CD4-positive, alpha-beta T cell (primary cell): ENCODE measurements at regions of chr10 and their contacts with region 1.

Region 1: GRCh38 chr10:1754506-1755153 is 17.3 kb upstream of the ADARB2 start:
- DNase-seq: no peak
- ATAC-seq: no peak
- H3K4me3 ChIP-seq: no peak overlapping the region
- H3K4me3 Mint-ChIP-seq: no peak overlapping the region
- H3K27ac ChIP-seq: no peak overlapping the region
- H3K27ac Mint-ChIP-seq: no peak overlapping the region
- H3K4me1 ChIP-seq: no peaks in the 10 kb centered on the region
- H3K4me1 Mint-ChIP-seq: no peaks in the 10 kb centered on the region
- H3K27me3 ChIP-seq: no peaks in the 10 kb centered on the region
- H3K27me3 Mint-ChIP-seq: peaks cover 10% of the 10 kb centered on the region
- CTCF ChIP-seq: no peak

Region 2: GRCh38 chr10:2978111-2978510 is 1223.5 kb after region 1 on chr10:
- CTCF ChIA-PET with region 1: no interaction called
- POLR2A ChIA-PET with region 1: no interaction called
- intact Hi-C with region 1: loop called (anchors 10 kb)
- DNase-seq: peak in 3 of 14 experiments; percentile 15 to 39 (median 32)
- ATAC-seq: no peak
- H3K4me3 ChIP-seq: no peak overlapping the region
- H3K4me3 Mint-ChIP-seq: no peak overlapping the region
- H3K27ac ChIP-seq: no peak overlapping the region
- H3K27ac Mint-ChIP-seq: no peak overlapping the region
- H3K4me1 ChIP-seq: no peaks in the 10 kb centered on the region
- H3K4me1 Mint-ChIP-seq: no peaks in the 10 kb centered on the region
- H3K27me3 ChIP-seq: no peaks in the 10 kb centered on the region
- H3K27me3 Mint-ChIP-seq: no peaks in the 10 kb centered on the region
- CTCF ChIP-seq: peak; percentile 42